PC-9 (cell line): ENCODE measurements at regions of chr10 and their contacts with region 1.

Region 1: DNA sequence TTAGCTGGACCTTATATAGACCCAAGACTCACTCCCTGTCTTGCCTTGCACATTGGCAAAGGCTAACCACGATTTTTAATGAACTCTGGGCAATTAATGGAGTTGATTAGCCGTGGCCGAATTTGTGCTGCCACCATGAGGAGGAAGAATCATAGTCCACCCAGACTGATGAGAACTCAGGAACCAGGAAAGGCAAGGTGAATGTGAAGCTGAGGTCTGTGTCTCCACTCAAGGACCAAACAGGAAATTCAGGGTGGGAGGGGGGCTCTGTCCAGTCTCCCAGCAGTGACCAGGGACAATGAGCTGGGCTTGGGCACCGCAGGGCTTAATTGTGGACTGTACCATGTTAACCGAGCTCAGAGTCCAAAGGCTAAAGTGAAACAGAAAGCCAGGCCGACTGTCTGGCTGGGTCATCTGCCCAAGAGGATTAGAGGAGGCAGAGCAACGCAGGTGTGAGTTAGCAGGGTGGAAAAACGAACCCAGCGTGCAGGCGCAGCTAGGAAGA is 127.0 kb upstream of the JCAD start:
- DNase-seq: peak; percentile 35 to 61
- H3K4me3 ChIP-seq: peak overlapping the region; percentile 17; the same call in 1 of the 2 replicates
- H3K27ac ChIP-seq: peak overlapping the region; percentile 49
- H3K4me1 ChIP-seq: peaks cover 55% of the 10 kb centered on the region
- H3K27me3 ChIP-seq: no peaks in the 10 kb centered on the region
- CTCF ChIP-seq: no peak; the same call in 1 of the 2 replicates

Region 2: GRCh38 chr10:29435809-29436501 is 750.5 kb before region 1 on chr10:
- CTCF ChIA-PET with region 1: interaction called, 12 read pairs
- POLR2A ChIA-PET with region 1: no interaction called
- intact Hi-C with region 1: no loop called
- DNase-seq: no peak
- H3K4me3 ChIP-seq: no peak overlapping the region
- H3K27ac ChIP-seq: no peak overlapping the region
- H3K4me1 ChIP-seq: no peaks in the 10 kb centered on the region
- H3K27me3 ChIP-seq: no peaks in the 10 kb centered on the region
- CTCF ChIP-seq: no peak

Region 3: GRCh38 chr10:30098613-30099012 is 87.8 kb before region 1 on chr10:
- CTCF ChIA-PET with region 1: interaction called, 5 read pairs
- POLR2A ChIA-PET with region 1: interaction called, 7 read pairs
- intact Hi-C with region 1: loop called (anchors 1 kb)
- DNase-seq: peak; percentile 38 to 92
- H3K4me3 ChIP-seq: no peak overlapping the region
- H3K27ac ChIP-seq: peak overlapping the region; percentile 77
- H3K4me1 ChIP-seq: peaks cover 43% of the 10 kb centered on the region
- H3K27me3 ChIP-seq: no peaks in the 10 kb centered on the region
- CTCF ChIP-seq: no peak

Region 4: GRCh38 chr10:30207485-30208052 is 21.1 kb after region 1 on chr10:
- CTCF ChIA-PET with region 1: interaction called, 6 read pairs
- POLR2A ChIA-PET with region 1: interaction called, 5 read pairs
- intact Hi-C with region 1: loop called (anchors 1 kb)
- DNase-seq: peak; percentile 67 to 83
- H3K4me3 ChIP-seq: no peak overlapping the region
- H3K27ac ChIP-seq: peak overlapping the region; percentile 18; the same call in 1 of the 2 replicates
- H3K4me1 ChIP-seq: peaks cover 18% of the 10 kb centered on the region
- H3K27me3 ChIP-seq: no peaks in the 10 kb centered on the region
- CTCF ChIP-seq: no peak

Region 5: GRCh38 chr10:30254926-30255325 is 68.5 kb after region 1 on chr10:
- CTCF ChIA-PET with region 1: no interaction called
- POLR2A ChIA-PET with region 1: interaction called, 10 read pairs
- intact Hi-C with region 1: no loop called
- DNase-seq: no peak
- H3K4me3 ChIP-seq: no peak overlapping the region
- H3K27ac ChIP-seq: no peak overlapping the region
- H3K4me1 ChIP-seq: no peaks in the 10 kb centered on the region
- H3K27me3 ChIP-seq: no peaks in the 10 kb centered on the region
- CTCF ChIP-seq: no peak